HepG2 (cell line): ENCODE measurements at regions of chr22 and their contacts with region 1.

Region 1: GRCh38 chr22:33202455-33202854 is 144.3 kb upstream of the SYN3 start:
- DNase-seq: no peak
- ATAC-seq: no peak
- H3K4me3 ChIP-seq: no peak overlapping the region
- H3K27ac ChIP-seq: no peak overlapping the region
- H3K4me1 ChIP-seq: no peaks in the 10 kb centered on the region
- H3K27me3 ChIP-seq: peaks cover 0 to 37% of the 10 kb centered on the region in 2 experiments; a peak in 4 of 5 replicates
- CTCF ChIP-seq: no peak
- EP300 ChIP-seq: no peak
- POLR2A ChIP-seq: no peak
- RAD21 ChIP-seq: no peak

Region 2: DNA sequence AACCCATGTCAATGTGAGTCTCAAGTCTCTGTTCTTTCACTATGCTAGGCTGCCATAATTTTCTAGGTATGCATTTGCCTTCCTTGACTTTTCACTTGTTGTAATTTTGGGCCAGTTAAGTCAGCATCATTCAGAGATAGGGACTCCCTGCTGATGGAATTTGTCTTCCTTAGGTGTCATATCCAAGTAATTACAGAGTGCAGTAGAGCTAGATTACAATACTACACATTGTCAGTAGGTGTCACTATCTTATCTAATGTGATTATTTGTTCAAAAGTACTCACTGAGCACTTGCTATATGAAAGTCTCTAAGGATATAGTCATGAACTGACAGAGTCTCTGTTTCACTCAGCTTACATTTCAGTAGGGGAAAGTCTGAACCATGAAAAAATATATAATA is 119.2 kb before region 1 on chr22:
- CTCF ChIA-PET with region 1: interaction called, 3 read pairs
- POLR2A ChIA-PET with region 1: no interaction called
- in situ Hi-C with region 1: no loop called
- intact Hi-C with region 1: loop called (anchors 2 kb)
- DNase-seq: no peak
- ATAC-seq: no peak
- H3K4me3 ChIP-seq: no peak overlapping the region
- H3K27ac ChIP-seq: no peak overlapping the region
- H3K4me1 ChIP-seq: no peaks in the 10 kb centered on the region
- H3K27me3 ChIP-seq: no peaks in the 10 kb centered on the region; a peak in 1 of 5 replicates
- CTCF ChIP-seq: peak; percentile 34
- EP300 ChIP-seq: no peak
- POLR2A ChIP-seq: no peak
- RAD21 ChIP-seq: no peak